ENCODE measurements at regions of chr2 and their contacts with region 1.

Region 1: GRCh38 chr2:164145093-164145987 is 409.5 kb upstream of the FIGN start:
- DNase-seq: no peak
- H3K4me3 ChIP-seq: no peak overlapping the region
- H3K27ac ChIP-seq: no peak overlapping the region
- H3K4me1 ChIP-seq: no peaks in the 10 kb centered on the region
- H3K27me3 ChIP-seq: no peaks in the 10 kb centered on the region
- CTCF ChIP-seq: no peak
- POLR2A ChIP-seq: no peak

Region 2: GRCh38 chr2:164178835-164179465 is 33.6 kb after region 1 on chr2:
- intact Hi-C with region 1: no loop called
- DNase-seq: no peak
- H3K4me3 ChIP-seq: no peak overlapping the region
- H3K27ac ChIP-seq: no peak overlapping the region
- H3K4me1 ChIP-seq: no peaks in the 10 kb centered on the region
- H3K27me3 ChIP-seq: no peaks in the 10 kb centered on the region
- CTCF ChIP-seq: no peak
- POLR2A ChIP-seq: no peak

Region 3: GRCh38 chr2:166000401-166000800 is 1855.1 kb after region 1 on chr2:
- intact Hi-C with region 1: loop called (anchors 10 kb)
- DNase-seq: no peak
- H3K4me3 ChIP-seq: no peak overlapping the region
- H3K27ac ChIP-seq: no peak overlapping the region
- H3K4me1 ChIP-seq: no peaks in the 10 kb centered on the region
- H3K27me3 ChIP-seq: no peaks in the 10 kb centered on the region
- CTCF ChIP-seq: no peak
- POLR2A ChIP-seq: no peak

Measured in breast epithelium (tissue), 4 donors.